MCF 10A (cell line): ENCODE measurements at regions of chr20 and their contacts with region 1.

Region 1: GRCh38 chr20:35664544-35665221 is at the starts of genes CPNE1 and RBM12:
- DNase-seq: peak; percentile 90
- H3K4me3 Mint-ChIP-seq: peak within 1 kb of the TSS; percentile 94
- H3K27ac Mint-ChIP-seq: peak within 1 kb of the TSS; percentile 98
- H3K4me1 Mint-ChIP-seq: peaks cover 19% of the 10 kb centered on the region
- H3K27me3 Mint-ChIP-seq: no peaks in the 10 kb centered on the region
- CTCF ChIP-seq: no peak
- total RNA-seq, gene CPNE1: 161 and 194 TPM in 2 replicates
- total RNA-seq, gene RBM12: 60.1 and 64.3 TPM in 2 replicates

Region 2: GRCh38 chr20:35181731-35182130 is 483.0 kb before region 1 on chr20:
- CTCF ChIA-PET with region 1: no interaction called
- POLR2A ChIA-PET with region 1: no interaction called
- intact Hi-C with region 1: no loop called
- DNase-seq: no peak
- H3K4me3 Mint-ChIP-seq: no peak overlapping the region
- H3K27ac Mint-ChIP-seq: no peak overlapping the region
- H3K4me1 Mint-ChIP-seq: no peaks in the 10 kb centered on the region
- H3K27me3 Mint-ChIP-seq: no peaks in the 10 kb centered on the region
- CTCF ChIP-seq: no peak

Region 3: DNA sequence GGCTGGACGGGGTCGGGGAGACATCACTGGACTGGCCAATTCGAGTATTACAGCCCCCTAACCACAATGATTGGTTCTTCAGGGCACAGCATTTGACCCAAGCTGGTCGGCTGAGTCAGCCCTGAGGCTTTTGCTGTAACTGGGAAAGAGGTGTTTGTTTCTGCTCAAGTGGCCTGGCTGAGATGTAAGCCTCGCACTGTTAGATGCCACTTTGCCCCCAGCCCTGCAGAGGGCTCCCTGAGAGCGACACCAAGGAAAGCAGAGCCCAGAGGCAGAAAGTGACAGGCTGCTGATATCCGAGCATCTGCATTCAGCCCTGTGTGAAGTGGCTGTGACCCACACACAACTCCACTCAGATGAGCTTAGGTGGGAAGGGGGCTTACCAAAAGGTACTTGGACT is 103.4 kb before region 1 on chr20:
- CTCF ChIA-PET with region 1: no interaction called
- POLR2A ChIA-PET with region 1: interaction called, 5 read pairs
- intact Hi-C with region 1: loop called (anchors 10 kb)
- DNase-seq: peak; percentile 51
- H3K4me3 Mint-ChIP-seq: no peak overlapping the region
- H3K27ac Mint-ChIP-seq: no peak overlapping the region
- H3K4me1 Mint-ChIP-seq: no peaks in the 10 kb centered on the region
- H3K27me3 Mint-ChIP-seq: no peaks in the 10 kb centered on the region
- CTCF ChIP-seq: no peak

Region 4: GRCh38 chr20:35648836-35649235 is 15.8 kb before region 1 on chr20:
- CTCF ChIA-PET with region 1: interaction called, 4 read pairs
- POLR2A ChIA-PET with region 1: interaction called, 54 read pairs
- intact Hi-C with region 1: no loop called
- DNase-seq: peak; percentile 18
- H3K4me3 Mint-ChIP-seq: no peak overlapping the region
- H3K27ac Mint-ChIP-seq: no peak overlapping the region
- H3K4me1 Mint-ChIP-seq: peaks cover 11% of the 10 kb centered on the region
- H3K27me3 Mint-ChIP-seq: no peaks in the 10 kb centered on the region
- CTCF ChIP-seq: no peak

Region 5: GRCh38 chr20:35771689-35772562 is 107.2 kb after region 1 on chr20 and contains the start of gene PHF20:
- CTCF ChIA-PET with region 1: no interaction called
- POLR2A ChIA-PET with region 1: interaction called, 16 read pairs
- intact Hi-C with region 1: no loop called
- DNase-seq: peak; percentile 92
- H3K4me3 Mint-ChIP-seq: peak within 1 kb of the TSS; percentile 91
- H3K27ac Mint-ChIP-seq: peak within 1 kb of the TSS; percentile 97
- H3K4me1 Mint-ChIP-seq: peaks cover 51% of the 10 kb centered on the region
- H3K27me3 Mint-ChIP-seq: no peaks in the 10 kb centered on the region
- CTCF ChIP-seq: no peak
- total RNA-seq, gene PHF20: 64.2 and 74.7 TPM in 2 replicates